Activated T-helper 1 cell treated with anti-CD3 and anti-CD28 coated beads, Interleukin-12 subunit alpha, Interleukin-12 subunit beta, Interleukin-2, Interleukin-4 antibody, amounts not matched to agents 30 ng/mL and 10 ng/mL and 1 ng/mL, durations not matched to agents 14 hours and 24 hours and 36 hours (primary cell): ENCODE measurements at regions of chr5 and their contacts with region 1.

Region 1: DNA sequence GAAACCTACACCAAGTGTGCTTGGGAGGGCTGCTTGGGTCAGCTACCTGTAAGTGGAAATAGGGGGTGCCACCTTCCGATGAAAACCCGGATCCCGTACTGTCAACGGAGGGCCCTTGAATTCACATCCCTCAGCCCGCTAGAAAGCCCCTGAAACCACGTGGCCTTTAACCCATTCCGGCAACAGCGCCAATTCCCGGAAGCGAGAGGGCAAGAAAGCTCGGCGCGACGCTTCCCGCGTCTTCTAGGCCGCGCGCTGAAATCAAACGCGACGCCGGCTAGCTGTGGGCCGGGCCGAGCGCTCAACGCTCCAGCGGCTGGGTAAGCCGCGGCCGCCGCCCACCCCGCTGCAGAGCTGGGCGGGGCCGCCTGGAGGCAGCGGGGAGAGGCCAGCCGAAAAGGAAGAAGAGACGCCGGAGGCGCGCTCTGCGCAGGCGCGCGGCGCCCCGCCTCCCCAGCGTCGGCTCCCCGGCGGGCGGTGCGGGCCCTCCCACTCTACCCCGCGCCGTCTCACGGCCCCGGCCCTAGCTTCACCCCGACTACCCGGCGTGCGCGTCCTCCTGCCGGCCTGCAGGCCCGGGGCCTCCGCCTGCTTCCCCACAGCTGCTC is at the start of gene KIF2A:
- DNase-seq: peak; percentile 95
- H3K4me3 Mint-ChIP-seq: peak within 1 kb of the TSS; percentile 99
- H3K27ac Mint-ChIP-seq: peak within 1 kb of the TSS; percentile 99
- H3K4me1 Mint-ChIP-seq: peaks cover 57% of the 10 kb centered on the region
- H3K27me3 Mint-ChIP-seq: no peaks in the 10 kb centered on the region
- total RNA-seq, gene KIF2A: 235 and 240 TPM in 2 replicates

Region 2: DNA sequence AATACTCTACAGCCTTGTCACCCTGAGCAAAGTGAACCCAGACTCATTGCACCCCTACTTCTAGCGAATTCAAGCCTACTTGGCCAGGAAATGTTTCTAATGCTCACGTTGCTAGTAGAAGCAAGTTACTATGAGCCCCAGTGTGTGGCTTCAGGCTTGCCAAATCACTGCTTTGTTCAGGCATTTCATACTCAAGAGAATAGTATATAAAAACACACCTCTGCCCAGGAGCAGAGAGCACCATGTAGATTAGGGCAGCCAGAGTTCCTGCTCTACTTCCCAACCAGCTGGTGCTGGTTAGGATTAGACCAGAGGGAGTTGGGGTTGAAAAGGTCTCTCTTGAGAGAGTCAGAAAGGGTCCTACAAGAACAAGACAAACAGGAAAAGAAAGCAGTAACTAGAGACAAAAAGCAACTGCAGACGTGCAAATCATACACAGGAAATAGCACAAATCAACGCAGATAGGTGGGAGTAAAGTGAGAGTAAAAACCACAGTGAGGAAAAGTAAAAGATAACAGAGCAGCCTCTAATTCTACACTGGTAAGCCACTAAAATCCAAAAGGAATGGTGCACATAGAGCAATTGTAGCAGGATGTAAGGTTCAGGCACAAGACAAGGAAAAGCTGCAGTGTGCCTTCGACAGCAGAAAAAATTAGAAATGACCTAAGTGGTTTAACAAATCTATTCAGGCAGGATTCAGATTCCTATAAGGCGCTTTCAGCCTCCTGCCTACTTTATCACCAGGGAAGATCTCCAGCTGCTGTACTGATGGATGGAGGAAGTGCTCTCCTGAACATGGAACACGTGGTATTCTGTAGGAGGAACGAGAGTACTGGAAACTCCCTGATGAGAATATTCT is 49.4 kb before region 1 on chr5:
- intact Hi-C with region 1: loop called (anchors 1 kb)
- DNase-seq: peak; percentile 18
- H3K4me3 Mint-ChIP-seq: peak overlapping the region; percentile 21
- H3K27ac Mint-ChIP-seq: peak overlapping the region; percentile 88
- H3K4me1 Mint-ChIP-seq: peaks cover 48% of the 10 kb centered on the region
- H3K27me3 Mint-ChIP-seq: no peaks in the 10 kb centered on the region

Region 3: GRCh38 chr5:62340392-62340791 is 34.6 kb after region 1 on chr5:
- intact Hi-C with region 1: loop called (anchors 1 kb)
- DNase-seq: no peak
- H3K4me3 Mint-ChIP-seq: no peak overlapping the region
- H3K27ac Mint-ChIP-seq: no peak overlapping the region
- H3K4me1 Mint-ChIP-seq: peaks cover 69% of the 10 kb centered on the region
- H3K27me3 Mint-ChIP-seq: no peaks in the 10 kb centered on the region

Region 4: GRCh38 chr5:62354028-62354874 is 48.4 kb after region 1 on chr5:
- intact Hi-C with region 1: loop called (anchors 1 kb)
- DNase-seq: no peak
- H3K4me3 Mint-ChIP-seq: no peak overlapping the region
- H3K27ac Mint-ChIP-seq: no peak overlapping the region
- H3K4me1 Mint-ChIP-seq: peaks cover 18% of the 10 kb centered on the region
- H3K27me3 Mint-ChIP-seq: no peaks in the 10 kb centered on the region

Region 5: DNA sequence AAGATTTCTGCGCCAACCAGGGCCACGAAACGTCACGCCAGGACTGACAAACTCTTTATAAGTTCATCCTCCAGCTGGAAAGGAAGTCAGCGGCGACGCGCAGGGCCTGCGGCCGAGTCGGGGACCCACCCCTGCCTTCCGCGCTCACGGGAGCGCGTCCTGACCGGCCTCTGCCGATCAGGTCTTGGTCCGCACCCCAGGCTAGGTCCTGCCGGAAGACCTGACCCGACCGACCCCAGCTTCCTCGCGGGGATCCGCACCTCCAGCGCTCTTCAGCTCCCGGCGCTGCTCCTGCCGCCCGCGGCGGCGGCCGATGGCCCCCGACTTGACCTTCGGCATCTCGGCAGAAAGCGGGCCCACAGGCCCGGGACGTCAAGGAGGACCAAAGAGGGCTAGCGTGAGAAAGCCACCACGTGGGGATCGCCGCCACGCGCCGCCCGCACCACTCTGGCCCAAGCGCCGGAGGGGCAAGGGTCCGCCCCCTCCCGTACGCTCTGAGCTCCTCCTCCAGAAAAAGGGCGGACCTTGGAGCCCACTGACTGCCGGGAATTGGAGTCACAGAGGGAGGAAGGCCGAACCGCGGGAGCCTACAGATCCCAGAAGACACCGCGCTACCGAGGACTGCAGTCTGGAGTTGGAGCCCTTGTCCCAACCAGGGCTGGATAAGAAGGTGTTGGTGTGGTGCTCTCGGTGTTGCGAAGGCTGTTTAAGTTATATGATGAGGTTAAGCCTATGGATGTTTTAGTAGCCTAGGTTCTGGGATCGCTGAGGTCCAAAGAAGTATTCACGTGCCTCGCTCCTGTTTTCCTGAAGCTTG is 97.8 kb after region 1 on chr5 and contains the start of gene DIMT1:
- intact Hi-C with region 1: loop called (anchors 1 kb)
- DNase-seq: peak; percentile 93
- H3K4me3 Mint-ChIP-seq: peak within 1 kb of the TSS; percentile 95
- H3K27ac Mint-ChIP-seq: peak within 1 kb of the TSS; percentile 94
- H3K4me1 Mint-ChIP-seq: peaks cover 34% of the 10 kb centered on the region
- H3K27me3 Mint-ChIP-seq: no peaks in the 10 kb centered on the region
- total RNA-seq, gene DIMT1: 42.4 and 45.0 TPM in 2 replicates

Region 6: GRCh38 chr5:62412537-62413329 is 106.9 kb after region 1 on chr5 and contains the start of gene IPO11:
- intact Hi-C with region 1: loop called (anchors 1 kb)
- DNase-seq: peak; percentile 99
- H3K4me3 Mint-ChIP-seq: peak within 1 kb of the TSS; percentile 94
- H3K27ac Mint-ChIP-seq: peak within 1 kb of the TSS; percentile 90
- H3K4me1 Mint-ChIP-seq: peaks cover 21% of the 10 kb centered on the region
- H3K27me3 Mint-ChIP-seq: peaks cover 7% of the 10 kb centered on the region
- total RNA-seq, gene IPO11: 52.5 and 54.2 TPM in 2 replicates